HepG2 (cell line): ENCODE measurements at regions of chr2 and their contacts with region 1.

Region 1: GRCh38 chr2:164479460-164479859 is 141.8 kb downstream of the GRB14 start:
- DNase-seq: peak; percentile 43
- ATAC-seq: peak; percentile 56; the same call in 2 of the 3 replicates
- H3K4me3 ChIP-seq: no peak overlapping the region
- H3K27ac ChIP-seq: no peak overlapping the region
- H3K4me1 ChIP-seq: peaks cover 15% of the 10 kb centered on the region
- H3K27me3 ChIP-seq: no peaks in the 10 kb centered on the region
- CTCF ChIP-seq: peak; percentile 73
- EP300 ChIP-seq: no peak
- POLR2A ChIP-seq: no peak
- RAD21 ChIP-seq: peak; percentile 37; the same call in 1 of the 2 replicates

Region 2: DNA sequence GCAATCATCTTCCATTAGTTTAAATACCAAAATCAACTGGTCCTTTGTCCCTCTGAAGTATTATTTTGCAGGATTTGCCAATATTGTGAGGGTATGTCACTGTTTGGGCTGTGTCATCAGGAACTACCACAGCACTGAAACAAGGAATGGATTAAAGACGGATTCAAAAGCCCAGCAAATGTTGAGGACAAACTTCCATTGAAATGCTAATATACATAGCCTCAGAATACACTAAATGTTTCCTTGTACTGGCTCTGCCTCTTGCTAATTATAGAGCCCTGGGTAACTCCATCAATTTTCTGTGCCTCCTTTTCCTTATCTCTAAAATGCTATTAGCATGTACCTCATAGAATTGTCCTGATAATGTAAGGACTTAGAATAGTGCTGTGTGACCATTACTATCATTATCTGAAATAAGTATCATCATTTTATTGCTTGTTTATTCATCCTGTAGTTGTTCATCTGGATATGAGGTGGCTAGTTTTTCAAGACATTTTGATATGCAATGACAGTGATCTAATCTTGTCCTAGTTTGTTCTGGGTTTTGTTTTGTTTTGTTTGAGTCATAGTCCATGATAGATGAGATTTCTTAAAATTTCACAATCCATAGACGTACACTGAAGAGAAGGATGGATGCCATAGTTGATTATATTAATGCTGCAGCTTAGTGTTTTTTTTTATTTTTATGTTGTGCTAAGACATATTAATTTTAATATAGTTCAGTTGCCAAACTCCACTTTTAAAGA is 1307.5 kb before region 1 on chr2:
- CTCF ChIA-PET with region 1: no interaction called
- POLR2A ChIA-PET with region 1: no interaction called
- in situ Hi-C with region 1: no loop called
- intact Hi-C with region 1: loop called (anchors 1 kb)
- DNase-seq: no peak
- ATAC-seq: no peak
- H3K4me3 ChIP-seq: no peak overlapping the region
- H3K27ac ChIP-seq: no peak overlapping the region
- H3K4me1 ChIP-seq: no peaks in the 10 kb centered on the region
- H3K27me3 ChIP-seq: no peaks in the 10 kb centered on the region
- CTCF ChIP-seq: no peak
- EP300 ChIP-seq: no peak
- POLR2A ChIP-seq: no peak
- RAD21 ChIP-seq: no peak

Region 3: GRCh38 chr2:163182764-163183354 is 1296.6 kb before region 1 on chr2:
- CTCF ChIA-PET with region 1: interaction called, 3 read pairs
- POLR2A ChIA-PET with region 1: no interaction called
- in situ Hi-C with region 1: no loop called
- intact Hi-C with region 1: loop called (anchors 2 kb)
- DNase-seq: no peak
- ATAC-seq: no peak
- H3K4me3 ChIP-seq: no peak overlapping the region
- H3K27ac ChIP-seq: no peak overlapping the region
- H3K4me1 ChIP-seq: no peaks in the 10 kb centered on the region
- H3K27me3 ChIP-seq: no peaks in the 10 kb centered on the region
- CTCF ChIP-seq: peak; percentile 56
- EP300 ChIP-seq: no peak
- POLR2A ChIP-seq: no peak
- RAD21 ChIP-seq: no peak

Region 4: DNA sequence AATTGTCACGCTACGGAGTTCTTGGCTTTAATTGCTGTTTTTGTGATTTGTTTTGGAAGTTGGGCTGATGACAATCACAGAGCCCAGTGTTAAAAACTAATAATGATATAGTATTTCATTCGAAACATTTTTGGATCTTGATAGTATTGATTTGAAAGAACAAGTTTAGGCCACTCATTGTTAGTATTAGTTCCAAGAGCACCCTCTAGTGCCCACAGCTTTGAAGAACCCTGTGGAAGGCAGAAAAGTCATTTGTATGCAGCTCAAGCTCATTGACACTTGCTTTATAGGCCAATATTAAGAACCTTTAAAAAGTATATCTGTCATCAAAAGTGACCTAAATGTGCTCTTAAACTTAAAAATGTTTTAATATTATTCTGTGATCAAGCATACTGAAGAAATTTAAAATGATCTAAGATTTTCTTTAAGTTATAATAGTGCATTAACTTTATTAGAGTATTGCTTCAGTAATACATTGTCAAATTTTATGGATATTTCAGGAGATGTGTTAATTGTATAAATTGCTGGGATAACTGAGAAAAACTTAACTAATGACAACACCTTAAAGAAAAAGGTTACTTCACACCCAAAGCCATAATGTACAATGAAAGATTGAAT is 49.2 kb before region 1 on chr2:
- CTCF ChIA-PET with region 1: no interaction called
- POLR2A ChIA-PET with region 1: no interaction called
- in situ Hi-C with region 1: no loop called
- intact Hi-C with region 1: loop called (anchors 1 kb)
- DNase-seq: peak; percentile 39
- ATAC-seq: peak; percentile 91
- H3K4me3 ChIP-seq: no peak overlapping the region
- H3K27ac ChIP-seq: no peak overlapping the region
- H3K4me1 ChIP-seq: no peaks in the 10 kb centered on the region
- H3K27me3 ChIP-seq: 0 out of 5 replicates have a peak, but pooled peaks cover 0 to 4% of the 10 kb centered on the region in 2 experiments
- CTCF ChIP-seq: peak; percentile 69
- EP300 ChIP-seq: no peak
- POLR2A ChIP-seq: no peak
- RAD21 ChIP-seq: no peak